Endothelial cell of umbilical vein (primary cell): ENCODE measurements at regions of chr6 and their contacts with region 1.

Region 1: DNA sequence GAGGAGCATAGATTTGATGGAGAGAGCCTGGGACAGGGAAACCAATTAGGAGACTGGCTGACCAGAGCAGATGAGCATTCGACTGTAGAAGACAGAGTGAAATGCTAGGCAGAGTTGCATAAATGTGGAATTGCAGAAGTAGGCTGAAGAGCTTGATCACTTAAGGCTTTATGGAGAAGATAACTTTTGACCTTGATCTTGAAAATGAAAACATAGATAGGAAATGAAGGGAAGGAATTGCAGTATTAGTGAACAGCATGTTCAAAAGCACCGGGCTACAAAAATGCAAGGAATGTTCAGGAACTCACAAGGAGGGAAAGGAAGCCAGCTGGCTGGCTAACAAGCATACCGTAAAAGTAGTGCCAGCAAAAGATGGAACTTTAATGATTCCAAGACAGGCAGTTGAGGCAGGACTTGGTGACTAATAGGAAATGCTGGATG is 20.5 kb upstream of the LTV1 start:
- DNase-seq: peak; percentile 93
- H3K4me3 ChIP-seq: no peak overlapping the region
- H3K27ac ChIP-seq: peak overlapping the region; percentile 93
- H3K4me1 ChIP-seq: peaks cover 54% of the 10 kb centered on the region
- H3K27me3 ChIP-seq: no peaks in the 10 kb centered on the region
- CTCF ChIP-seq: no peak
- POLR2A ChIP-seq: peak; percentile 57

Region 2: GRCh38 chr6:143687591-143687990 is 135.0 kb before region 1 on chr6:
- CTCF ChIA-PET with region 1: no interaction called
- POLR2A ChIA-PET with region 1: no interaction called
- dilution Hi-C with region 1: no loop called
- intact Hi-C with region 1: loop called (anchors 2 kb)
- DNase-seq: no peak
- H3K4me3 ChIP-seq: peak overlapping the region in 1 of 3 experiments; percentile 14
- H3K27ac ChIP-seq: peak overlapping the region; percentile 12
- H3K4me1 ChIP-seq: peaks cover 28% of the 10 kb centered on the region
- H3K27me3 ChIP-seq: no peaks in the 10 kb centered on the region
- CTCF ChIP-seq: no peak
- POLR2A ChIP-seq: no peak

Region 3: DNA sequence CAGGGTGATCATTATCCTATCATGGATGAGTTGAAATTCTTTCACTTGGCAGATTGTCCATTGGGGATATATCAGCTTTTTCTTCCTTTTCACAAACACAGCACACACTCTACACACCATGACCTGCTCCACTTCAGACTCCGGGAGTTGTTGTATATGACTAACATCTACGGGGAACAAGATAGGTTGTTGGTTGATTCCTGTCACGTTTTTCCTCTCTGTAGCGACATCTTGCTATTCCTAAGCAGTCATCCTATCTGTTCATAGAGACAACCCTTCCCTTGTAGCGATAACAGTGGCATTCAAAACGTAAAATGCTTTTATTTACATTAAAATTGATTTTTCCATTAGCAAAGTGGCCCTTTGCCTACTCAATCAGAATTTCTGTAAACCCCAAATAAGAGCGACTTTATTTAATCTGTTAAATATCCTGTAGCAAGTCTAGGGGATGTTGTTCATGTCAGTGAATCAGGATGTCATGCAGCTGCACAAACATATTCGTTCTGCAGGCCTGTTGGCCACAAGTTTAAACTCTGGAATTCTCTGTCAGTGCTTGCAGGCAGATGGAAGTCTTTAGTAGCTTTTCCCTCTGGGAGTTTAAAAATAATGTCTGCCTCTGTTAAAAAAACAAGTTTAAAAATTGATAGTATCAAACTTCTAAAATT is 121.8 kb before region 1 on chr6:
- CTCF ChIA-PET with region 1: interaction called, 5 read pairs
- POLR2A ChIA-PET with region 1: no interaction called
- dilution Hi-C with region 1: no loop called
- intact Hi-C with region 1: loop called (anchors 1 kb)
- DNase-seq: peak; percentile 83
- H3K4me3 ChIP-seq: no peak overlapping the region
- H3K27ac ChIP-seq: peak overlapping the region; percentile 46
- H3K4me1 ChIP-seq: peaks cover 51% of the 10 kb centered on the region
- H3K27me3 ChIP-seq: no peaks in the 10 kb centered on the region
- CTCF ChIP-seq: no peak
- POLR2A ChIP-seq: no peak

Region 4: DNA sequence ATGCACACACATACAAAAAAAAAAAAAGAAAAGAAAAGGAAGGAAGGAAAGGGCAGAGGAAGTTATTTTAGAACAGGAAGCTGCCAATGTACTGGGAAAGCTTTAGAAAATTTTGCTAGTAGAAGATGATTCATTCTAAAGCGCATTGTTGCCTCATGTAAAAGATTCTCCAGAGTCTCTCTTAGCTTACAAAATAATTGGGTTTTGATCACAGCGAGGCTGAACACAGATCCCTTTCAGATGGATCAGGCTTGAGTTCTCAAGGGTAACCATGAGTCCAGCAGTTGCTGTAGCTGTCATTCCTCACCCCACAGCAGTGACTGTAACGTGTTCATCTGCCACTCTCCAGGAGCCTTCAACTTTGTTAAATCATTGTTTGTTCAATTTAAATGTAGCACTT is 62.9 kb before region 1 on chr6:
- CTCF ChIA-PET with region 1: interaction called, 6 read pairs
- POLR2A ChIA-PET with region 1: interaction called, 5 read pairs
- dilution Hi-C with region 1: no loop called
- intact Hi-C with region 1: loop called (anchors 1 kb)
- DNase-seq: peak; percentile 36
- H3K4me3 ChIP-seq: no peak overlapping the region
- H3K27ac ChIP-seq: peak overlapping the region; percentile 32
- H3K4me1 ChIP-seq: peaks cover 33% of the 10 kb centered on the region
- H3K27me3 ChIP-seq: no peaks in the 10 kb centered on the region
- CTCF ChIP-seq: no peak
- POLR2A ChIP-seq: no peak

Region 5: DNA sequence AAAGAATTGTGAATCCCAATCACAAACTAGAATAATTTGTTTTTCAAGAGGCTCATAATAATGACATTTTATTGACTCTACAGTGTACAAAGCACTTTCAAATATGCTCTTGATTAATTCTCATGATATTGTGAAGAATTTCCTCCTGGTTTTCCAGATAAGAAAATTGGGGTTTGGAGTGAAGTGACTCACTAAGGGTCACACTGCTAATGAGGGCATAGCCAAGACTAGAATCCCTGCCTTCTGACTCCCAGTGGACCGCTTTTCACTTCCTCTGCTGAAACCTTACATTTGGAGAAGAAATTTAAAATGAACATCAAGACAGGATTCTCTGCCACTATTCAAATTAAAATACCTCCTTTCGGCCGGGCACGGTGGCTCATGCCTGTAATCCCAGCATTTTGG is 17.8 kb before region 1 on chr6:
- CTCF ChIA-PET with region 1: interaction called, 4 read pairs
- POLR2A ChIA-PET with region 1: interaction called, 3 read pairs
- dilution Hi-C with region 1: no loop called
- intact Hi-C with region 1: loop called (anchors 1 kb)
- DNase-seq: peak; percentile 85
- H3K4me3 ChIP-seq: no peak overlapping the region
- H3K27ac ChIP-seq: peak overlapping the region; percentile 59
- H3K4me1 ChIP-seq: peaks cover 45% of the 10 kb centered on the region
- H3K27me3 ChIP-seq: no peaks in the 10 kb centered on the region
- CTCF ChIP-seq: no peak
- POLR2A ChIP-seq: peak; percentile 56

Region 6: DNA sequence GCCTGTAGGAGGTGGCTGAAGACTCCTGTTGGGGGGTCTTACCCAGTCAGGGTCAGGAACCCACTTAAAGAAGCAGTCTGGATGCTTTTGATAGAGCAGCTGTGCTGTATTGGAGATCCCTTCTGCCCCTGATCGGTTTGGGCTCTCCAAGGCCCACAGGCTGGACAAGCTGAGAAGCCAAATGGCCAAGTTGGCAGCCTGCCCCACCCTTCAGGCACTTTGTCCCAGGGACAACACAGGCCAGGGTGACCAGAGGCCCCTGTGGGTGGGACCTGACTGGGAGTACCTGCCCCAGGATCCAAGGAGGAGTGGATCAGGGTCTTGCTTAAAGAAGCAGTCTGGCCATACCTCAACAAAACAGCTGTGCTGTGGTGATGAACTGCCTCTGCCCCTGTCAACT is 90.1 kb after region 1 on chr6:
- CTCF ChIA-PET with region 1: no interaction called
- POLR2A ChIA-PET with region 1: no interaction called
- dilution Hi-C with region 1: no loop called
- intact Hi-C with region 1: no loop called
- DNase-seq: no peak
- H3K4me3 ChIP-seq: no peak overlapping the region
- H3K27ac ChIP-seq: no peak overlapping the region
- H3K4me1 ChIP-seq: no peaks in the 10 kb centered on the region
- H3K27me3 ChIP-seq: peaks cover 2 to 5% of the 10 kb centered on the region in 2 experiments
- CTCF ChIP-seq: no peak
- POLR2A ChIP-seq: no peak

Region 7: DNA sequence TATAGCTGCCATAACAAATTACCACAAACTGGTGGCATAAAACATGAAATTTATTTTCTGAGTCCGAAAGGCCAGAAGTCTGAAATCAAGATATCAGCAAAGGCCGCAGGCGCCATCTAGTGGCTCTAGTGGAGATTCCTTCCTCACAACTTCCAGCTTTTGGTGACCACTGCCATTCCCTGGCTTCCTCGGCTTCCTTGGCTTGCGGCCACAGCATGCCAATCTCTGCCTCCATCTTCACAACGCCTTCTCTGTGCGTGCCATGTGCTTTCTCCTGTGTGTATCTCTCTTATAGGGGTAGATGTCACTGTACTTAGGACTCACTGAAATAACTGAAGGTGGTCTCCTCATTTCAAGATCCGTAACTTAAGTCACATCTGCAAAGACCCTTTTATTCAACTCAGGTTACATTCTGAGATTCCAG is 190.9 kb after region 1 on chr6:
- CTCF ChIA-PET with region 1: interaction called, 3 read pairs
- POLR2A ChIA-PET with region 1: no interaction called
- dilution Hi-C with region 1: no loop called
- intact Hi-C with region 1: loop called (anchors 2 kb)
- DNase-seq: peak; percentile 77
- H3K4me3 ChIP-seq: no peak overlapping the region
- H3K27ac ChIP-seq: no peak overlapping the region
- H3K4me1 ChIP-seq: no peaks in the 10 kb centered on the region
- H3K27me3 ChIP-seq: peaks cover 11 to 16% of the 10 kb centered on the region in 2 experiments
- CTCF ChIP-seq: peak; percentile 80 to 83
- POLR2A ChIP-seq: no peak